Posterior vena cava (tissue), 2 donors: ENCODE measurements at regions of chr10 and their contacts with region 1.

Region 1: DNA sequence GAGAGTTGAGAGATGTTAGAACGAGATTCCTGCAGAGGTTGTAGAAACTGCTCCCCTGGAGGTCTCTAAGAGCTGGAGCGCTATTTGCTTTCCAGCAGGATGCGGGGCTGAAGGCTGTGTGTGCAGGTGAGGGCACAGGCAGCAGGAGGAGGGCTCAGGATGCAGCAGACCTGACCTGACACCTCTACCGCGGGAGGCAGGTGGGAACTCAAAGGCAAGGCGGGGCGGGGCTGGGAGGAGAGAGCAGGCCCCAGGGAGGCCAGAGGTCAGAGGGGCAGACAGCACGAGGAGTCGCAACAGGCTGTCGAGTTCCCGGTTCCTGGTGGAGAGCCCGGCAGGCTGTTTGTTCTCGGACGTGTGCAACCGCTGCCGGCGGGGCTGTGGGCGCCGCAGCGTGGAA is 7.9 kb upstream of the CRTAC1 start:
- DNase-seq: no peak

Region 2: DNA sequence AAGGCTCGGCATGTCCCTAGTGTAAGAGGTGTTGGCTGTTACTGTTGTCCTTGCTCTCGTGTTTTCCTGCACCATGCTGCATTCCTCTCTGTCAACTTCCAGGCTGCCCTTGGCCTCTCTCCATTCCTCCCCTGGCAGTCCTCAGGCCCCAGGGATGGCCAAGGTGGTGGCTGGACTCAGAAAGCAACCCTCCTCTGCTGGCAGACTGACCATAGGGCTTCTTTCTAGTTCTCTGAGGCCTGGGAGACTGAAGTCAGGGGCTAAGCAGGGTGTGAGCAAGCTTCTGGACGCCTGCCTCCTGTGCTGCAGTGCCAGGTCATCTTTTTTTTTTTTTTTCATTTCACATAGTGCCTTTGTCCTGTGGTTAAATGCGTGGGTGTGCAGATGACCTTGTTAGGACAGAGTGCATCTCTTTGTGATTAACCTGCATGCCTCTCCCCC is 116.7 kb before region 1 on chr10:
- intact Hi-C with region 1: loop called in 1 of 2 experiments (anchors 5 kb)
- DNase-seq: no peak